Activated T-helper 2 cell treated with anti-CD3 and anti-CD28 coated beads, Interferon-gamma antibody, Interleukin-2, Interleukin-4, amounts not matched to agents 10 μg/mL and 5 μg/mL and 100 μg/mL, durations not matched to agents 14 hours and 24 hours and 36 hours (primary cell): ENCODE measurements at regions of chr11 and their contacts with region 1.

Region 1: GRCh38 chr11:18526521-18527296 is at the start of gene TSG101:
- DNase-seq: peak; percentile 90
- H3K4me3 Mint-ChIP-seq: peak within 1 kb of the TSS; percentile 97
- H3K27ac Mint-ChIP-seq: peak within 1 kb of the TSS; percentile 98
- H3K4me1 Mint-ChIP-seq: peaks cover 30% of the 10 kb centered on the region
- H3K27me3 Mint-ChIP-seq: no peaks in the 10 kb centered on the region
- total RNA-seq, gene TSG101: 49.5 and 53.3 TPM in 2 replicates

Region 2: DNA sequence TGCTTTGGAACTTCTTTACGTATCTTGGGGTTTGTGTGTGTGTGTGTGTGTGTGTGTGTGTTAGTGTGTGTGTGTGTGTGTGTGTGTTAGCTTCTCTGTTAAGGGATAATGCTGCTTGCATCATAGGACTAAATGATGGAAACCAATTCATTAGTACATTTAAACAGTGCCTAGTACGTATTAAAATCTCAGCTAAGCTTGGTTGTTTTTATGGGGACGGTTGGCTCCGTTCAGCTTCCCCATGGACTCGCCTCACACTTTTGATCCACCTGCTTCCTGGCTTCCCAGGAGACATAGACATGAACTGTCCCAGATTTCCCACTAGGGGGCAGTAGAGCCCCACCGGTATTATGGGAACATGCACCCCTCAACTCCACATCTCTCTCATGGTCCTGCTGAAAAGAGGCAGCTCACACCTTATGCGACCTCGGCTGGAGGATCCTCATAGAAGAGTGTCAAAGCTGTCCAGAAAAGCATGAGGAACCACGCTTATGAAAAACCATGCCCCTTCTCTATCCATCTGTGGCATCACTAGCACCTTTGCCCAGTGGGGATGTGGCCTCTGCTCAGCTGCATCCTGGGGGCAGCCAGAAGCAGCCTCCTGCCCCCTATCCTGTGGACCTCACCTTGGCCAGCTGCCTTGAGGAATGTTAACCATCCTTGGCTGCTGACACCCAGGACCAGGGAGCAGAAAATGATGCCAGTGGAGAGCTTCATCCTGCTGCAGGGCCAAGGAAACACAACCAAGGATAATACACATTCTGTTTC is 411.2 kb before region 1 on chr11:
- intact Hi-C with region 1: loop called (anchors 5 kb)
- DNase-seq: peak; percentile 46
- H3K4me3 Mint-ChIP-seq: no peak overlapping the region
- H3K27ac Mint-ChIP-seq: no peak overlapping the region
- H3K4me1 Mint-ChIP-seq: peaks cover 2% of the 10 kb centered on the region
- H3K27me3 Mint-ChIP-seq: peaks cover 24% of the 10 kb centered on the region

Region 3: GRCh38 chr11:18321980-18322711 is 204.6 kb before region 1 on chr11 and contains the starts of genes GTF2H1 and HPS5:
- intact Hi-C with region 1: loop called (anchors 2 kb)
- DNase-seq: peak; percentile 93
- H3K4me3 Mint-ChIP-seq: peak within 1 kb of the TSS; percentile 92
- H3K27ac Mint-ChIP-seq: peak within 1 kb of the TSS; percentile 98
- H3K4me1 Mint-ChIP-seq: peaks cover 57% of the 10 kb centered on the region
- H3K27me3 Mint-ChIP-seq: no peaks in the 10 kb centered on the region
- total RNA-seq, gene GTF2H1: 51.4 and 54.3 TPM in 2 replicates
- total RNA-seq, gene HPS5: 33.3 and 34.2 TPM in 2 replicates

Region 4: DNA sequence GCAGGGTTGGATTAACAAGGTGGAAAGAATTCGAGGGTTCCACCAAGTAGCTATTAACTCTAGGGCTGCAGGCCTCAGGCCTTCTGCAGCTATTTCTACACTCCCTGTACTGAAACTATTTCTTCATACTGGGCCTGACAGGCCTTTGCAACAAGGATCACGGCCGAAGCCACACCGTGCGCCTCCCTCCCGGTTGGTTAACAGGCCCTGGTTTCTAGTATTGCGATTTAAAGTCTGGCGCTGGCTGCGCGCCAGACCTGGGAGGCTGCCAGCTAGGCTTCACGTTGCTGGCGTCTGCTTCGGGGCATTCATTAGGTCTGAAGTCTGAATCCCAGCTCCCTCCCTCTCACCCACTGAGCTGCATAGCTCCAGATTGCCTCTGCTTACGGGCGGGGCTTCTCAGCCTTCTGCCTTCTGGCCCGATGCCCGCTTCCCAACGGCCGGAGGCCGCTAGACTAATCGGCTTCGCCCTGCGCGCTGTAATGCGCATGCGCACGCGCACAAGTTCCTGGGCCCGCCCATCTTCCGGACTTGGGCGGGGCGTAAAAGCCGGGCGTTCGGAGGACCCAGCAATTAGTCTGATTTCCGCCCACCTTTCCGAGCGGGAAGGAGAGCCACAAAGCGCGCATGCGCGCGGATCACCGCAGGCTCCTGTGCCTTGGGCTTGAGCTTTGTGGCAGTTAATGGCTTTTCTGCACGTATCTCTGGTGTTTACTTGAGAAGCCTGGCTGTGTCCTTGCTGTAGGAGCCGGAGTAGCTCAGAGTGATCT is 130.8 kb before region 1 on chr11:
- intact Hi-C with region 1: loop called (anchors 1 kb)
- DNase-seq: peak; percentile 97
- H3K4me3 Mint-ChIP-seq: peak overlapping the region; percentile 97
- H3K27ac Mint-ChIP-seq: peak overlapping the region; percentile 95
- H3K4me1 Mint-ChIP-seq: peaks cover 45% of the 10 kb centered on the region
- H3K27me3 Mint-ChIP-seq: no peaks in the 10 kb centered on the region

Region 5: GRCh38 chr11:18438691-18439090 is 88.0 kb before region 1 on chr11:
- intact Hi-C with region 1: no loop called
- DNase-seq: no peak
- H3K4me3 Mint-ChIP-seq: no peak overlapping the region
- H3K27ac Mint-ChIP-seq: no peak overlapping the region
- H3K4me1 Mint-ChIP-seq: no peaks in the 10 kb centered on the region
- H3K27me3 Mint-ChIP-seq: peaks cover 6% of the 10 kb centered on the region

Region 6: GRCh38 chr11:18615628-18616392 is 89.1 kb after region 1 on chr11:
- intact Hi-C with region 1: loop called (anchors 2 kb)
- DNase-seq: no peak
- H3K4me3 Mint-ChIP-seq: peak overlapping the region; percentile 43
- H3K27ac Mint-ChIP-seq: peak overlapping the region; percentile 66
- H3K4me1 Mint-ChIP-seq: peaks cover 45% of the 10 kb centered on the region
- H3K27me3 Mint-ChIP-seq: no peaks in the 10 kb centered on the region

Region 7: GRCh38 chr11:18650859-18651557 is 124.3 kb after region 1 on chr11:
- intact Hi-C with region 1: loop called (anchors 5 kb)
- DNase-seq: no peak
- H3K4me3 Mint-ChIP-seq: no peak overlapping the region
- H3K27ac Mint-ChIP-seq: no peak overlapping the region
- H3K4me1 Mint-ChIP-seq: peaks cover 8% of the 10 kb centered on the region
- H3K27me3 Mint-ChIP-seq: no peaks in the 10 kb centered on the region